Activated CD8-positive, alpha-beta T cell treated with anti-CD3 and anti-CD28 coated beads for 36 hours (primary cell): ENCODE measurements at regions of chr13 and their contacts with region 1.

Region 1: GRCh38 chr13:110819203-110820014 is 95.5 kb downstream of the ANKRD10 start:
- DNase-seq: peak; percentile 83
- ATAC-seq: peak; percentile 93
- H3K4me3 Mint-ChIP-seq: no peak overlapping the region
- H3K27ac Mint-ChIP-seq: no peak overlapping the region
- H3K4me1 Mint-ChIP-seq: peaks cover 12% of the 10 kb centered on the region
- H3K27me3 Mint-ChIP-seq: peaks cover 1% of the 10 kb centered on the region
- CTCF ChIP-seq: peak; percentile 91

Region 2: GRCh38 chr13:110715395-110716235 is 103.8 kb before region 1 on chr13:
- CTCF ChIA-PET with region 1: interaction called, 4 read pairs
- POLR2A ChIA-PET with region 1: interaction called, 4 read pairs
- intact Hi-C with region 1: loop called (anchors 10 kb)
- DNase-seq: peak; percentile 98
- ATAC-seq: peak; percentile 64
- H3K4me3 Mint-ChIP-seq: peak overlapping the region; percentile 98
- H3K27ac Mint-ChIP-seq: peak overlapping the region; percentile 96
- H3K4me1 Mint-ChIP-seq: peaks cover 33% of the 10 kb centered on the region
- H3K27me3 Mint-ChIP-seq: no peaks in the 10 kb centered on the region
- CTCF ChIP-seq: no peak